PC-9 (cell line): ENCODE measurements at regions of chr17 and their contacts with region 1.

Region 1: GRCh38 chr17:80260069-80260554 is 540 bp upstream of the RNF213 start:
- DNase-seq: peak; percentile 39 to 86
- H3K4me3 ChIP-seq: peak overlapping the region; percentile 66
- H3K27ac ChIP-seq: peak overlapping the region; percentile 76
- H3K4me1 ChIP-seq: peaks cover 23% of the 10 kb centered on the region
- H3K27me3 ChIP-seq: no peaks in the 10 kb centered on the region
- CTCF ChIP-seq: no peak

Region 2: GRCh38 chr17:80068301-80069222 is 191.6 kb before region 1 on chr17:
- CTCF ChIA-PET with region 1: no interaction called
- POLR2A ChIA-PET with region 1: interaction called, 12 read pairs
- intact Hi-C with region 1: no loop called
- DNase-seq: peak in 1 of 2 experiments; percentile 40
- H3K4me3 ChIP-seq: no peak overlapping the region
- H3K27ac ChIP-seq: no peak overlapping the region
- H3K4me1 ChIP-seq: no peaks in the 10 kb centered on the region
- H3K27me3 ChIP-seq: no peaks in the 10 kb centered on the region
- CTCF ChIP-seq: no peak

Region 3: GRCh38 chr17:80212962-80213642 is 47.0 kb before region 1 on chr17:
- CTCF ChIA-PET with region 1: no interaction called
- POLR2A ChIA-PET with region 1: no interaction called
- intact Hi-C with region 1: no loop called
- DNase-seq: no peak
- H3K4me3 ChIP-seq: no peak overlapping the region
- H3K27ac ChIP-seq: no peak overlapping the region
- H3K4me1 ChIP-seq: no peaks in the 10 kb centered on the region
- H3K27me3 ChIP-seq: no peaks in the 10 kb centered on the region
- CTCF ChIP-seq: no peak

Region 4: GRCh38 chr17:80287806-80288567 is 27.9 kb after region 1 on chr17:
- CTCF ChIA-PET with region 1: no interaction called
- POLR2A ChIA-PET with region 1: interaction called, 50 read pairs
- intact Hi-C with region 1: no loop called
- DNase-seq: no peak
- H3K4me3 ChIP-seq: no peak overlapping the region
- H3K27ac ChIP-seq: no peak overlapping the region
- H3K4me1 ChIP-seq: no peaks in the 10 kb centered on the region
- H3K27me3 ChIP-seq: no peaks in the 10 kb centered on the region
- CTCF ChIP-seq: no peak